Posterior vena cava (tissue), 2 donors: ENCODE measurements at regions of chr15 and their contacts with region 1.

Region 1: GRCh38 chr15:101433396-101433795 is 56.1 kb downstream of the PCSK6 start:
- DNase-seq: no peak

Region 2: GRCh38 chr15:101358895-101359294 is 74.5 kb before region 1 on chr15:
- intact Hi-C with region 1: no loop called
- DNase-seq: no peak

Region 3: GRCh38 chr15:101407439-101407838 is 26.0 kb before region 1 on chr15:
- intact Hi-C with region 1: loop called in 1 of 2 experiments (anchors 1 kb)
- DNase-seq: no peak